ENCODE measurements at regions of chrX and their contacts with region 1.

Region 1: GRCh38 chrX:17021851-17022604 is 75.6 kb downstream of the REPS2 start:
- DNase-seq: no peak
- H3K4me3 ChIP-seq: no peak overlapping the region
- H3K4me1 ChIP-seq: 0 out of 2 replicates have a peak, but pooled peaks cover 2% of the 10 kb centered on the region
- H3K27me3 ChIP-seq: no peaks in the 10 kb centered on the region

Region 2: GRCh38 chrX:16756724-16757123 is 265.3 kb before region 1 on chrX:
- in situ Hi-C with region 1: no loop called
- DNase-seq: peak in 1 of 2 experiments; percentile 20
- H3K4me3 ChIP-seq: no peak overlapping the region
- H3K4me1 ChIP-seq: no peaks in the 10 kb centered on the region
- H3K27me3 ChIP-seq: no peaks in the 10 kb centered on the region

Region 3: DNA sequence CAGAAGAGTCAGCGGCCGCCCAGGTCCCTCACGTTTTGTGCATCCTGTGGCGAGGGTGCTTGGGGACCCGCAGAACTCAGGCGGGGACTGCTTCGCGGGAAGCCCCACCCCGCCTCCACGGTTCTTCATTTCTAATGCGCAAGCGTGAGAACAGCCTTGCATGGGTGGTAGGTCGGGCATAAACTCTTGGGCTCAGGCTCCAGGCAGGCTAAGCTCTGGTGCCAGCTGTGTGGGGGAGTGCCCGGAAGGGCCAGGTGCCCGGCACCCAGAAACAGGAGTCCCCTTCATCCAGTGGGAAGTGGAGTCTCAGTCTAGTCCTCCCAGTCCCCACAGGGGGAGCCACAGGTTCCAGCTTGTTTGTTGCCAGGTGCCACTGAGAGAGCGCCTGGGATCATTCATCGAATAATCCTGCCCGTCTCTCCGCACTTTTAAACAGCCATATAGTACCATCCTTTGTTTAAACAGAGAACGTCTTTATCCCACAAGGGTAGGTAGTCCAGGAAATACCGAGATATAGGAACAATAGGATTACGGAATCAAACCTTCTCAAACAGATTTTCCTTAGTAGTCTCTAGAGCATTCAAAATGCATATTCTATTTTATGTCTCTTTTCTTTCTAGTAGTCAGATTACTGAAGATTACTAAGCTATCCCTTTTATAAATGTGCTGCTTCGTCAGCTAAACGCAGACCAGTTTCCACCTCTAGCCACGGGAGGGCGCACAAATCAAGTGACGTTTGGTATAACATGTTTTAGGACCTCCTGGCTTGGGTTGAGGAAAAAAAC is 139.1 kb before region 1 on chrX:
- in situ Hi-C with region 1: loop called (anchors 10 kb)
- DNase-seq: peak; percentile 77 to 92
- H3K4me3 ChIP-seq: peak overlapping the region; percentile 23
- H3K4me1 ChIP-seq: peaks cover 7% of the 10 kb centered on the region
- H3K27me3 ChIP-seq: no peaks in the 10 kb centered on the region

Measured in HAP-1 (cell line).